RWPE1 (cell line): ENCODE measurements at regions of chr10 and their contacts with region 1.

Region 1: DNA sequence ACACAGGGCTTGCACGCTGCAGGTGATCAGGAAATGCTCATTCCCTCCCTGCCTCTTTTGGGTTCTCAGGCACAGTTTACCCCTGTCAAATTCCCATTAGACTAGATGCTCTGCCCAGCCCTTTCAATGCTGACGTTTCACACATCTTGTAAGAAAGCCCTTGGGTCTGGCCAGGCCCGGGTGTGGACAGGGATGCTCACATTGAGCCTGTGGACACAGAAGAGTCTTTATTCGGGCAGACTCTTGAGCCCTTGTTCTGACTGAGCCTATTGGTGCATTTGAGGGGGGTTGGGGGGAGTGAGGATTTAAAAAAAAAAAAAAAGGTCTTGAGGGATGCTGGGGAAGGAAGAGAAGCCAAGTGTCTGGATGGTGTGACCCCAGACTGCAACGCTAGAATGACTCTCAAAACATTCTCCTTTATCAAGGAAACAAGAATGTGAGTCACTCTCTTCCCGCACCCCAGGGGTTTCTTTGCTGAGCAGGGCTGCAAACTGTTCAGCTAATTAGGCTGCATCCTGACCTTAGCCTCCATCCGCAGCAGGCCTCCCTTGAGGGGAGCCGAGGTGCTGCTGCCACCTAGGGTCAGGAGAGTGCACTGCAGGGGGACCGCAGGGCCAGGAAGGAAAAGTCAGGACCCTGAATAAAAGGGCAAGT is 53.6 kb upstream of the TMEM72 start:
- DNase-seq: peak; percentile 45
- H3K27ac ChIP-seq: no peak overlapping the region
- CTCF ChIP-seq: peak; percentile 93

Region 2: DNA sequence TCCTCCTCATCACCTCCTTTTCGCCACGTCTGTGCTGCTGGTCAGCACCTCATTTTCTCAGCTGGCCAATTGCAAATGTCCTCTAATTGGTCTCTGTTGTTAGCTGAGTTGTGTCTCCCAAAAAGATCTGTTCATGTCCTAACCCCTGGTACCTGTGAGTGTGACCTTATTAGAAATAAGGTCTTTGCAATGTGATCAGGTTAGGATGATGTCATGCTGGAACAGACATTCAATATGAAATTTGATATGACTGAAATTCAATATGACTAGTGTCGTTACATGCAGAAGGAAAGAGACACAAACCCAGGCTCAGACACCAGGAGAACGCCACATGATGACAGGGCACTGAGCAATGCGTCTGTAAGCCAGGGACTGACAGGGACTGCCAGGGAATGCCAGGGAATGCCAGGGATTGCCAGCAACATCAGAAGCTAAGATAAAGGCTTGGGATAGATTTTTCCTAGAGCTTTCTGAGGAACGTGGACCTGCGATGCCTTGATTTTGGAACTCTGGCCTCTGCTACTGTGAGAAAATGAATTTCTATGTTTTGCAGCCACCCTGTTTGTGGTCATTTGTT is 395.1 kb before region 1 on chr10:
- CTCF ChIA-PET with region 1: interaction called, 10 read pairs
- POLR2A ChIA-PET with region 1: no interaction called
- DNase-seq: no peak
- H3K27ac ChIP-seq: no peak overlapping the region
- CTCF ChIP-seq: no peak